T-cell (primary cell): ENCODE measurements at regions of chr1 and their contacts with region 1.

Region 1: DNA sequence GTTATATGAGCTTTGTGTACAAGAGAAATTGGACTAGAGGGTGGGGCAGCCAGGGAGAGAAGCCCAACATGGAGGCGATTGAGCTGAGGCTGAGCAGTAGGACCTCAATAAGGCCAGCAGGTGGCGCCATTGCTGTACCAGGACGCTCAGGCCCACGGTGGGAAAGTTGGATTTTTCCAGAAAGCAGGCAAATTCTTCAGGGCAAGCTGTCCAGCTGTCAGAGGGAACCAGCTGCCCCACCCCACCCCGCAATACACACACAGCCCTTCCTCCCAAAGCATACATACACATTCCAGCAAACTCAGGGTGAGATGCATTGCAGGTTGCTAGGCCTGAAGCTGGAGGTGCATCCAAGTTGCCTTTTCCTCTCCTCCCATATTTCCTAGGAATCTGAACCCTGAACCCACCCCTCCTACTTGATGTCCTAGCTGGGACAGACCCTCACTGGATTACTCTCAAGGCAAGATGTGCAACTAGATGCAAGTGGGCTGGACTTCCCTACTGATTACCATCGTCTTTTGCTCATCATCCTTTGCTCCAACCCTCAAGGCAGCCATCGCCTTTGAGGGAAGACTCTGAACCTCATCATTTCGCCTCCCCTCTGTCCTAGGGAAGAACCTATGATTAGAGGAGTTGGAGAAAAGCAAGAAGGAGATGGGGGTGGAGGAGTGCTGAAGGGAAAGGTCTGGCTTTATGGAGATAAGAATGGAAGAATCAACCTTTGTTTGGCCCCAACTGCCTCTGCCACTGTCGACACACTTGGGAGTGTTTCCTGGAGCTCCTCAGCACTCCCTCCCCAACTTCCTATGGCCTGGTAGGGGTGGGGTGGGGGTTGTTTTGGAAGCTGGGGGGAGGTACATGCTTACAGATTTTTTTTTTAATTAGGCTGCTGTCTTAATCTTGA is 25.5 kb downstream of the CD34 start:
- DNase-seq: peak; percentile 19 to 89 (median 61)
- ATAC-seq: peak; percentile 66 to 70 (median 68)
- H3K4me3 ChIP-seq: no peak overlapping the region
- H3K4me3 Mint-ChIP-seq: peak overlapping the region in 1 of 3 donors; percentile 74
- H3K27ac ChIP-seq: no peak overlapping the region
- H3K27ac Mint-ChIP-seq: peak overlapping the region; percentile 99
- H3K4me1 ChIP-seq: peaks cover 12 to 23% of the 10 kb centered on the region in 2 experiments
- H3K4me1 Mint-ChIP-seq: peaks cover 35 to 44% (median 42%) of the 10 kb centered on the region in 3 donors
- H3K27me3 ChIP-seq: peaks cover 0 to 6% of the 10 kb centered on the region in 2 experiments
- H3K27me3 Mint-ChIP-seq: peaks cover 0 to 8% of the 10 kb centered on the region in 2 donors

Region 2: GRCh38 chr1:207861442-207862177 is 23.8 kb before region 1 on chr1:
- CTCF ChIA-PET with region 1: interaction called, 4 to 148 read pairs
- POLR2A ChIA-PET with region 1: interaction called in 1 of 2 experiments, 6 read pairs
- DNase-seq: peak in 32 of 35 experiments; percentile 22 to 64 (median 40)
- ATAC-seq: peak; percentile 58 to 80 (median 70)
- H3K4me3 ChIP-seq: no peak overlapping the region
- H3K4me3 Mint-ChIP-seq: peak overlapping the region; percentile 43 to 91 (median 54)
- H3K27ac ChIP-seq: peak overlapping the region; percentile 76
- H3K27ac Mint-ChIP-seq: peak overlapping the region; percentile 87 to 92
- H3K4me1 ChIP-seq: peaks cover 26 to 65% of the 10 kb centered on the region in 2 experiments
- H3K4me1 Mint-ChIP-seq: peaks cover 60 to 65% (median 64%) of the 10 kb centered on the region in 3 donors
- H3K27me3 ChIP-seq: no peaks in the 10 kb centered on the region
- H3K27me3 Mint-ChIP-seq: no peaks in the 10 kb centered on the region

Region 3: DNA sequence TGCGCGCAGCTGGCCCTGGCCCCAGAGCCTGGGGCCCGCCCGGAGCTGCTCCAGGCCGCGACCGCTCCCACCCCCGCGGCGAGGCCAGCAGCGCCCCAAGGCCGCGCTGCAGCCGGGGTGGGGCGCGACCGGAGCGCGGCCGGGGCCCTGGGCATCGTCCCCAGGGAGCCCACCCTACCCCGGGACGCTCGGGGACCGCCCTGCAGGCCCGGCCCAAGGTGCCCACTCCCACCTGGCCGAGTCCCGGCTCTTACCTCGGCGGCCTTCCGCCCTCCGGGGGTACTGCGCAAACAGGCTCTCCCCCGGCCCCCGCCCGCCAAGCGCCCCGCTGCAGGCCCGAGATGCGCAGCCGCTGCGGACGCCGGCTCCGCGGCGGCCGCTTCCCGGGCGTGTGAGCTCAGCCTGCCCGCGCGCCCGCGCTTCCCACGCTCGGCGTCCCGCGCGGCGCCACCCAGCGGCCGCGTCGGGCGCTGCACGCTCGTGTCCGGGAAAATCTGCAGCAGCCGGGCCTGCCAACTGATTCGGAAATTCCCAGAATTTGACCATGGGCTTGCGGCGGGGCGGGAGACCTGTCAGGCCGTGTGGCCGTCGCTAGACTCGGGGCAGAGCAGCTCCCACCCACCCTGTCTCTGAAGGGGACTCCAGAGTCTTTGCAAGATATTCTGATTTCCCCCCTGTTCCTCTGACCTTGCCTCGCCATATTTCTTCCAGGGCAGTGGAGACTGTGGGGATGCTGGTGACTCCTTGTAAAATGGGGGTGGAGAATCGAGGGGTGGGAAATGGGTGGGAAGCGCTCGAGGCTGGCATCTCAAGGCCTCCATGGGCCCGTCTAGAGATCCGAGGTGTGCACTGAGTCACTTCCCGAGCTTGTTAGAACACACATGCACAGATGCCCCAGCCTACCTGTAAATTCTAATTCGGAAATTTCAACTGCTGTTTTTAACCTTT is 16.3 kb before region 1 on chr1:
- CTCF ChIA-PET with region 1: interaction called, 58 to 148 read pairs
- POLR2A ChIA-PET with region 1: interaction called in 1 of 2 experiments, 3 read pairs
- DNase-seq: peak; percentile 31 to 90 (median 59)
- ATAC-seq: peak; percentile 64 to 79 (median 70)
- H3K4me3 ChIP-seq: peak overlapping the region; percentile 91
- H3K4me3 Mint-ChIP-seq: peak overlapping the region; percentile 91 to 97 (median 93)
- H3K27ac ChIP-seq: peak overlapping the region; percentile 91
- H3K27ac Mint-ChIP-seq: peak overlapping the region; percentile 92 to 95
- H3K4me1 ChIP-seq: peaks cover 24 to 79% of the 10 kb centered on the region in 2 experiments
- H3K4me1 Mint-ChIP-seq: peaks cover 82 to 89% (median 86%) of the 10 kb centered on the region in 3 donors
- H3K27me3 ChIP-seq: no peaks in the 10 kb centered on the region
- H3K27me3 Mint-ChIP-seq: no peaks in the 10 kb centered on the region

Region 4: GRCh38 chr1:207897188-207897587 is 11.8 kb after region 1 on chr1:
- CTCF ChIA-PET with region 1: interaction called, 5 to 11 read pairs
- POLR2A ChIA-PET with region 1: no interaction called
- DNase-seq: no peak
- ATAC-seq: no peak
- H3K4me3 ChIP-seq: no peak overlapping the region
- H3K4me3 Mint-ChIP-seq: no peak overlapping the region
- H3K27ac ChIP-seq: no peak overlapping the region
- H3K27ac Mint-ChIP-seq: no peak overlapping the region
- H3K4me1 ChIP-seq: no peaks in the 10 kb centered on the region
- H3K4me1 Mint-ChIP-seq: no peaks in the 10 kb centered on the region
- H3K27me3 ChIP-seq: no peaks in the 10 kb centered on the region
- H3K27me3 Mint-ChIP-seq: no peaks in the 10 kb centered on the region

Region 5: GRCh38 chr1:207963427-207964194 is 78.2 kb after region 1 on chr1:
- CTCF ChIA-PET with region 1: interaction called, 11 to 59 read pairs
- POLR2A ChIA-PET with region 1: no interaction called
- DNase-seq: peak; percentile 42 to 90 (median 73)
- ATAC-seq: peak; percentile 85 to 93 (median 87)
- H3K4me3 ChIP-seq: peak overlapping the region; percentile 79 to 88
- H3K4me3 Mint-ChIP-seq: peak overlapping the region; percentile 77 to 86 (median 79)
- H3K27ac ChIP-seq: peak overlapping the region; percentile 42
- H3K27ac Mint-ChIP-seq: peak overlapping the region in 1 of 2 donors; percentile 69
- H3K4me1 ChIP-seq: peaks cover 0 to 25% of the 10 kb centered on the region in 2 experiments
- H3K4me1 Mint-ChIP-seq: peaks cover 12 to 18% (median 16%) of the 10 kb centered on the region in 3 donors
- H3K27me3 ChIP-seq: peaks cover 0 to 35% of the 10 kb centered on the region in 2 experiments
- H3K27me3 Mint-ChIP-seq: peaks cover 20 to 21% of the 10 kb centered on the region in 2 donors